Endothelial cell of umbilical vein (primary cell): ENCODE measurements at regions of chr12 and their contacts with region 1.

Region 1: DNA sequence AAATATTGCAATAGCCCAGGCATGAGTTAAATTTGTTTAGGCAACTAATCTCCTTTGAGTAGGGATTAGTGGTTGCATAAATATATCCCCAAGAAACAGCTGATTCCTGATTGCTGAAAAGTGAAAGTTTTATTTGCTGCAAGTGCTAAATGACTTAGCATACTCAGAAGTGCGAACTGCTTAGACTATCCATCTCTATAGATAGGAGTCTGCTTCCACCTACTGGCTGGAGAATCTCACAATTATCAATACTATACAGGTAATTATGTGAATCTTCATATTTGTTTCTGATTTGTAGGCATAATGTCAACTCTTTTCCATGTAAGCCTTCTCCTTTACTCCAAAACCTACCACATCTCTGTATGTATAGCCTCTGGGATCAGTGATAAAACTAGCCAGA is 11.9 kb upstream of the SLCO1B3 start:
- DNase-seq: peak; percentile 59
- H3K4me3 ChIP-seq: no peak overlapping the region
- H3K27ac ChIP-seq: no peak overlapping the region
- H3K4me1 ChIP-seq: no peaks in the 10 kb centered on the region
- H3K27me3 ChIP-seq: no peaks in the 10 kb centered on the region
- CTCF ChIP-seq: peak in 1 of 2 donors; percentile 20
- POLR2A ChIP-seq: no peak

Region 2: GRCh38 chr12:20463913-20464524 is 334.5 kb before region 1 on chr12:
- CTCF ChIA-PET with region 1: no interaction called
- POLR2A ChIA-PET with region 1: no interaction called
- dilution Hi-C with region 1: no loop called
- intact Hi-C with region 1: loop called (anchors 2 kb)
- DNase-seq: peak; percentile 44
- H3K4me3 ChIP-seq: no peak overlapping the region
- H3K27ac ChIP-seq: no peak overlapping the region
- H3K4me1 ChIP-seq: no peaks in the 10 kb centered on the region
- H3K27me3 ChIP-seq: no peaks in the 10 kb centered on the region
- CTCF ChIP-seq: peak; percentile 26 to 41
- POLR2A ChIP-seq: no peak

Region 3: GRCh38 chr12:20646239-20646827 is 152.2 kb before region 1 on chr12:
- CTCF ChIA-PET with region 1: interaction called, 13 read pairs
- POLR2A ChIA-PET with region 1: no interaction called
- dilution Hi-C with region 1: no loop called
- intact Hi-C with region 1: loop called (anchors 1 kb)
- DNase-seq: peak; percentile 58
- H3K4me3 ChIP-seq: no peak overlapping the region
- H3K27ac ChIP-seq: no peak overlapping the region
- H3K4me1 ChIP-seq: no peaks in the 10 kb centered on the region
- H3K27me3 ChIP-seq: no peaks in the 10 kb centered on the region
- CTCF ChIP-seq: peak; percentile 48 to 56
- POLR2A ChIP-seq: no peak